Activated T-helper 2 cell treated with anti-CD3 and anti-CD28 coated beads, Interferon-gamma antibody, Interleukin-2, Interleukin-4, amounts not matched to agents 10 μg/mL and 5 μg/mL and 100 μg/mL, durations not matched to agents 14 hours and 24 hours and 36 hours (primary cell): ENCODE measurements at regions of chr3 and their contacts with region 1.

Region 1: GRCh38 chr3:120095226-120095978 is 1.2 kb upstream of the GSK3B start:
- DNase-seq: peak; percentile 89
- H3K4me3 Mint-ChIP-seq: no peak overlapping the region
- H3K27ac Mint-ChIP-seq: no peak overlapping the region
- H3K4me1 Mint-ChIP-seq: peaks cover 19% of the 10 kb centered on the region
- H3K27me3 Mint-ChIP-seq: no peaks in the 10 kb centered on the region

Region 2: DNA sequence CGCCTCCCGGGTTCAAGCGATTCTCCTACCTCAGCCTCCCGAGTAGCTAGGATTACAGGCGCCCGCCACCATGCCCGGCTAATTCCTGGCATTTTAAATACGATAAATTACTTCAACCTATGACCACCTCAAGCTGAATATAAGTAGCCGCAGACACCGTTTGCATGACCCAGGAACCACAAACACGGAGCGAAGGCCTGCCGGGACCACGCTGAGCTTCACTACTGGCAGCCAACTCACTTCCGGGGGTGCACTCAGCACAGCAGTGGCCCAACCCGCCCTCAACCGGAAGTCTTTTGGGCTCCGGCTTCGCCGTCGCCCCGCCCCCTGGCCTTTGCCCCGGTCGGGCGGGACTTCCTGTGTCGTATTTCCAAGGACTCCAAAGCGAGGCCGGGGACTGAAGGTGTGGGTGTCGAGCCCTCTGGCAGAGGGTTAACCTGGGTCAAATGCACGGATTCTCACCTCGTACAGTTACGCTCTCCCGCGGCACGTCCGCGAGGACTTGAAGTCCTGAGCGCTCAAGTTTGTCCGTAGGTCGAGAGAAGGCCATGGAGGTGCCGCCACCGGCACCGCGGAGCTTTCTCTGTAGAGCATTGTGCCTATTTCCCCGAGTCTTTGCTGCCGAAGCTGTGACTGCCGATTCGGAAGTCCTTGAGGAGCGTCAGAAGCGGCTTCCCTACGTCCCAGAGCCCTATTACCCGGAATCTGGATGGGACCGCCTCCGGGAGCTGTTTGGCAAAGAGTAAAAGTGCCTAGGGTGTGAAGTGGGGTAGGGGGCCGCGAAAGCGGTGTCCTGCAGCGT is 597.0 kb before region 1 on chr3 and contains the start of gene TIMMDC1:
- intact Hi-C with region 1: loop called (anchors 1 kb)
- DNase-seq: peak; percentile 96
- H3K4me3 Mint-ChIP-seq: peak within 1 kb of the TSS; percentile 96
- H3K27ac Mint-ChIP-seq: peak within 1 kb of the TSS; percentile 95
- H3K4me1 Mint-ChIP-seq: peaks cover 32% of the 10 kb centered on the region
- H3K27me3 Mint-ChIP-seq: no peaks in the 10 kb centered on the region
- total RNA-seq, gene TIMMDC1: 93.6 and 101 TPM in 2 replicates

Region 3: GRCh38 chr3:119831022-119831421 is 264.4 kb before region 1 on chr3:
- intact Hi-C with region 1: loop called (anchors 5 kb)
- DNase-seq: no peak
- H3K4me3 Mint-ChIP-seq: no peak overlapping the region
- H3K27ac Mint-ChIP-seq: no peak overlapping the region
- H3K4me1 Mint-ChIP-seq: peaks cover 8% of the 10 kb centered on the region
- H3K27me3 Mint-ChIP-seq: no peaks in the 10 kb centered on the region

Region 4: DNA sequence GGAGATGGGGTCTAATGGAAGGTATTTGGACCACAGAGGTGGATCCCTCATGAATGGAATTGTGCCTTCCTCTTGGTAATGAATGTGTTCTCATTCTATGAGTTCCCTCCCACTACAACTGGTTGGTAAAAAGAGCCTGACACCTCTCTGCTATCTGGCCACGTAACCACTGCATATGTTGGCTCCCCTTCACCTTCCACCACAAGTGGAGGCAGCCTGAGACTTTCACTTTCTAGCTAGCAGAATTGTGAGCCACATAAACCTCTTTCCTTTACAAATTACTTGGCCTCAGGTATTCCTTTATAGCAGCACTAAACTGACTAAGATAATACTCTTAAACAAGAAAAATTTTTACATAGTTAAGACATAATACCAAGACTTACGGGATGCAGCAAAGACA is 158.2 kb before region 1 on chr3:
- intact Hi-C with region 1: loop called (anchors 2 kb)
- DNase-seq: peak; percentile 22
- H3K4me3 Mint-ChIP-seq: peak overlapping the region; percentile 22
- H3K27ac Mint-ChIP-seq: peak overlapping the region; percentile 34
- H3K4me1 Mint-ChIP-seq: peaks cover 29% of the 10 kb centered on the region
- H3K27me3 Mint-ChIP-seq: no peaks in the 10 kb centered on the region

Region 5: GRCh38 chr3:119955972-119956371 is 139.4 kb before region 1 on chr3:
- intact Hi-C with region 1: no loop called
- DNase-seq: no peak
- H3K4me3 Mint-ChIP-seq: no peak overlapping the region
- H3K27ac Mint-ChIP-seq: no peak overlapping the region
- H3K4me1 Mint-ChIP-seq: no peaks in the 10 kb centered on the region
- H3K27me3 Mint-ChIP-seq: no peaks in the 10 kb centered on the region

Region 6: GRCh38 chr3:120033596-120033995 is 61.8 kb before region 1 on chr3:
- intact Hi-C with region 1: no loop called
- DNase-seq: no peak
- H3K4me3 Mint-ChIP-seq: no peak overlapping the region
- H3K27ac Mint-ChIP-seq: no peak overlapping the region
- H3K4me1 Mint-ChIP-seq: peaks cover 10% of the 10 kb centered on the region
- H3K27me3 Mint-ChIP-seq: no peaks in the 10 kb centered on the region

Region 7: DNA sequence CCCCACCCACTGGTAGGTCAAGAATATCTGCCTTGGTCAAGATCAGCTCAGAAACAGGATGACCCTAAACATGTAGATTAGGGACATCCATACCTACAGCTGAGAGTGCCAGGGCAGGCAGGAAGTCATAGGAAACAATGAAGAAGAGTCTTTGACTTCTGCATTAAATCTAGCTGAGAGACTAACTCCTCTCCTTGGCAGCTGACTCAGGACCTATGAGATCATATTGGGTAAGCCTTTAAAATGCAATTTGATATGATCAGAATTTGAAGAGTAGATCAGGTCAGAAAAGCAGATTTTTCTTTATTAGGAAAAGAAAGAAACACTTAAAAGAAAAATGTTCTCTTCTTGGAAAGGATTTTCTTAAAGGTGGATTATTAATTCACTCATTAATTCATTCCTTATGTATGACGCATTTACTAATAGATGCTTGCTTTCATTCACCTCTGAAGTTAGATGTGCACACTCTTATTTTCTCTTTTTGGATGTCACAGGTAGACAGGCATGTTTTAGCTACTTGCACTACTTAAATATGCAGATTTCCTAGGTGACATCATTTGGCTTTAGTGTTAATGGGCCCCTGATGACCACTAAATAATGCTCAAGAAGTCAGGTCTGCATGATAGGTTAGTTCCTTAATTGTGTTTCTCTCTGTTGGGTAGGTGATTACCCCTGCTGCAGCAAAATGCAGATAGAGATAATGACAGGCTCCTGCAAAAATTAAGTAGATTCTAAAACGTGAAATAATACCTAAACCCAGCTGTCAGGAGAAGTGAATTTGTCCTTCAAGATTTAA is 34.5 kb after region 1 on chr3:
- intact Hi-C with region 1: no loop called
- DNase-seq: no peak
- H3K4me3 Mint-ChIP-seq: no peak overlapping the region
- H3K27ac Mint-ChIP-seq: no peak overlapping the region
- H3K4me1 Mint-ChIP-seq: no peaks in the 10 kb centered on the region
- H3K27me3 Mint-ChIP-seq: no peaks in the 10 kb centered on the region

Region 8: DNA sequence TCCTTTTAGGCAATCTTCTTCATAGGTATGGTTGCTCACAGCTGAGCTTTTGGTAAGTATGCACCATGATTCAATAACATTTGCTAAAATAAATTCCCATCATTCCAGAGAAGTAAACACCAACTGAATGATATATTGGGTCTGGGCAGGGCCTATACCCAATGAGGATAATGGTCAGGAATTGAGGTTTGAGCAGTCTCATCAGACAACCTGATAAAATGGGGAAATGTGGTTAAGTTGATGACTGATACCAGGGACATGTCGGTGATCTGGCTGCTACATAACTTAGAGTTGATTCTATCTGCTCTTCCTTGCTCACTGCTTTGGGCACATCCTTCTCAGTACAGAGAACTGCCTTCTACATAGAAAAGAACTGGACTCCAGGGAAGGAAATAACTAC is 96.8 kb after region 1 on chr3:
- intact Hi-C with region 1: no loop called
- DNase-seq: no peak
- H3K4me3 Mint-ChIP-seq: no peak overlapping the region
- H3K27ac Mint-ChIP-seq: no peak overlapping the region
- H3K4me1 Mint-ChIP-seq: no peaks in the 10 kb centered on the region
- H3K27me3 Mint-ChIP-seq: peaks cover 6% of the 10 kb centered on the region

Region 9: DNA sequence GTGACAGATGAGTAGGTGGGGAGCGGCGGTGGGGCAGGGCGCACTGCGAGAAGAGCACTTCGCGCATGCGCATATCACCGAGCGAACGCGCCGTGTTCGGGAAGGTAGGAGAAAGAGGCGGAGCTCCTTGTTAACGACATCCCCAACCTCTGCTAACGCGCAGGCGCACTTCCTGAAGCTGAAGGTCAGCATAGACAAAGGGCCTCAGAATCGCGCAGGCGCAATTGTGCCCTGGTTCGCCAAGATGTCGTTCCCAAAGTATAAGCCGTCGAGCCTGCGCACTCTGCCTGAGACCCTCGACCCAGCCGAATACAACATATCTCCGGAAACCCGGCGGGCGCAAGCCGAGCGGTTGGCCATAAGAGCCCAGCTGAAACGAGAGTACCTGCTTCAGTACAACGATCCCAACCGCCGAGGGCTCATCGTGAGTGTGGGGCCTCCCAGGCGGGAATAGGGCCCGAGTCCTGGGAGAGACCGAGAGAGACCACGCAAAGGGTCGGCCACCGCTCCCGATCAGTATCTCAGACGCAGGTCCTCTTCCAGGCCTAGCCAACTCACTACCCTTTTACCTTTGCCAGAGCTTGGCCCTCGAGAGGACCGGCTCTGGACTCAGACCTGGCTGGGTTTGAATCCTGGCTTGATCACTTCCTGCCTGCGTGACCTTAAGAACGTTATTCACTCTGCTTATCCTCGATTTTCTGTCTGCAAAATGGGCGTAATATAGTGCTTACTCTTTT is 500.9 kb after region 1 on chr3 and contains the start of gene NDUFB4:
- intact Hi-C with region 1: loop called (anchors 10 kb)
- DNase-seq: peak; percentile 95
- H3K4me3 Mint-ChIP-seq: peak within 1 kb of the TSS; percentile 89
- H3K27ac Mint-ChIP-seq: peak within 1 kb of the TSS; percentile 93
- H3K4me1 Mint-ChIP-seq: peaks cover 9% of the 10 kb centered on the region
- H3K27me3 Mint-ChIP-seq: peaks cover 9% of the 10 kb centered on the region
- total RNA-seq, gene NDUFB4: 142 and 154 TPM in 2 replicates